AG04449 (cell line): ENCODE measurements at regions of chr15 and their contacts with region 1.

Region 1: DNA sequence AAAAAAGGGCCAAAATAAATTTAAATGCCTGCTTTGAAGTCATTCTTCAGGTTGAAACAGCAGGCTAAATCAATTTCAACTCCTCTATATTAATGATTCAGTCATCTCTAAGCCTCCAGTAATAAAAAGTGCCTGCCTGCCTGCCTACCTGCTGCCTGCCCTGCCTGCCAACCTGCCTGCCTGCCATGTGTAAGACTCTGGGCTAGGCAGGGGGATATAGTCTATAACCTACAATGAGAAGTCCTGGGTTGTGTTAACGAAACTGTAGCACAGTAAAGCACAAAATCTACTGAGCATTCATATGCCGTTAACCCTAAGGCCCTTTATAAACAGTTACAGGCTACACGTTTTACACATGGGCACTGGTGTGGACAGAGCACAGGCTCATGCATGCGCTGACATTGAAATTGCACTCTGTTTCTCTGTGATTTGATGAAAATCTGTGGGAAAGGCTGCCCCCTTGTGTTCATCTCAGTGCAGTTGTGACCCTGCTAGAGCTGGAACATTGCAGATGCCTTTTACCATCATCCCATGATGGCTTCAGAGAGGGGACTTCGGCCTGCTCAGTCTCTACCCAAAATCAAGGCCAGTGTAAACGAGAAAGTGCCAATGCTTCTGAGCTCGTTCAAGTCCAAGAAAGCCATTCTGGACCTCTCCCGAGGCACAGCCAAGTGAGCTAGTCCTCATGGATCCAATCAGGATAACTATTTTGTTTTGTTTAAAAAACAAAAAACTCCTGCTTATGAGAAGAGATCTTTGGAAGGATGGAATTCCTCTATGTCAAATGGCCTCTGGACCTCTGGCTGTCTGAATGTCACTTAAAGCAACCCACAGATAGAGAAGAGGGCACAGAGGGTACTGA is 64.6 kb downstream of the EFL1 start:
- DNase-seq: no peak
- H3K4me3 ChIP-seq: no peak overlapping the region
- CTCF ChIP-seq: peak; percentile 79

Region 2: DNA sequence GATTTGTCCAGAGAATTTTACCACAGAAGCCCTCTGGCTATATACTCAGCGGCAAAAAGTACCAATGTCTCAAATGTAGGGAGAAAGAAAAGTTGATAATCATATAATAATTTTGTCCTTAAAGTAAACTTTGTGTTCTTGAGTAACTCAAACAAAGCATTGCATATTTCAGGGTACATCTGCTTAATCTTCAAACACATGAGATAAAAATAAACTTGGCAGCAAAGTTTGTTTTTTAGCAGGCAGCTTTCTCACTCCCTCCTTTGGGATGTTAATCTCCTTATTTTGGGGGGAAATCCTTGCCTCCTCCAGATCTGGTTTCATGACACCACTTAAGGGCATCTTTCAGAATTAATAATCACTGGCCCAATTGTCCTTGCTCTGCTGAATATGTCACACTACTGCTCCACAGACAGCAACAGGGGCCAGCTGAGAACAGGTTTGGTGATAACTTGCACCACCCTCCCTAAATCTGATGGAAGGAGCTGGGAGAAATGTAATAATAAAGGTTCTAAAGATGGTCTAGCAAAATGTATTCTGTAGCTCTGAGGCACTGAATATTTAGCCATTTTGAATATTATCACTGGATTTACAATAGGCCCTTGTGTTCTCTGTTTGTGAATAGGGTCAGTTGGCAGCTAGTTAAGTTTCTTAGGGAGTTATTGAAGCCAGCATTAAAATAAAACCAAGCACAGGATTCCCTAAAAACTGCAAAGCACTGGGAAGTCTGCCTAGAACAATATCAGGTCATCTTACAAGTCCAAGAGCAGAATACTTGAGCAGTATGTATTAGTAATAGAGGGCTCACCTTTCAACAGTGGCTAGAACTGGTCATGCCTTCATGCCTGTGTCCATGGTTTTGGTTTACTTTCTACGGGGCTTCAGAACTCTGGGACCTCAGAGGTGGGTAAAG is 14.6 kb before region 1 on chr15:
- CTCF ChIA-PET with region 1: interaction called, 14 read pairs
- POLR2A ChIA-PET with region 1: no interaction called
- DNase-seq: peak; percentile 76
- H3K4me3 ChIP-seq: no peak overlapping the region
- CTCF ChIP-seq: no peak